Activated CD4-positive, alpha-beta memory T cell treated with anti-CD3 and anti-CD28 coated beads, Interleukin-2, amount 10 ng/mL, durations not matched to agents 7 days and 5 days (primary cell): ENCODE measurements at regions of chr5 and their contacts with region 1.

Region 1: DNA sequence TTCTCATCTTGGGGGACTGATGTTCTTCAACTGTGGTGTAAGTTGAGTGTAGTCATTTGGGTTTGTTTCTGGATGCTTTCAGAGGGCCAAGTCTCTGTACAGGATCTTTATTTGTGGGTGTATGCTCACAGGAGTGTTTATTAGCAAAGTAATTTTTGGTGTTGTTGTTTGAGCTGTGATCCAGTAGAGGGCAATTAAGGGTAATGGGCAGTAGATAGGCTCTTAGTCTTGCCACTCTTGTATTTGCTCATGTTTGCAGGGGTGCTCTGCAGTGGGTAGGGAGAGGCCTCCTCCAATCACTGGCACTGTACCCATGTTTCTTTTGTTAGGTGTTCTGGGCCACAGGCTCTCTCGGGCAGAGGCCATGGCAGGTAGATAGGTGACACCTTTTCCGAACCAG is 45.9 kb upstream of the ITGA2 start:
- DNase-seq: no peak
- H3K4me3 Mint-ChIP-seq: no peak overlapping the region
- H3K27ac Mint-ChIP-seq: no peak overlapping the region
- H3K4me1 Mint-ChIP-seq: peaks cover 17% of the 10 kb centered on the region
- H3K27me3 Mint-ChIP-seq: peaks cover 7% of the 10 kb centered on the region

Region 2: DNA sequence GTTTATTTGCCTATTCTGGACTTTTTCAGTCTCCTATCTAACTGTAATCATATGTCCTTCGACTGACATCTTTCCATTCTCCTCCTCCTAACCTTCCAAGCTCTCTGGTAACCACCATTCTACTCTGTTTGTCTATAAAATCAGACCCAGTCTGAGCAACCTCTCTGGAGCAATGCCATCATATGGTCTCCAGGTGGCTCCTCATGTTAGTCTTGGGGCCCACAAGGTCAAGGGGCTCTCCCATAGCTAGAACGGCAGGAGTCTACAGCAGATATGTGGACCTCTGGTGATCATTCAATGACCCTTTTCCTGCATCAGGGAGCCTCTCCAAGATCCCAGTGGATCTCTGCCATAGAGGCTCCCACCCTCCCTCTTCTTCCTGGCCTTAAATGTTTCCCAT is 562.9 kb before region 1 on chr5:
- CTCF ChIA-PET with region 1: no interaction called
- POLR2A ChIA-PET with region 1: no interaction called
- DNase-seq: no peak
- H3K4me3 Mint-ChIP-seq: no peak overlapping the region
- H3K27ac Mint-ChIP-seq: no peak overlapping the region
- H3K4me1 Mint-ChIP-seq: no peaks in the 10 kb centered on the region
- H3K27me3 Mint-ChIP-seq: no peaks in the 10 kb centered on the region

Region 3: GRCh38 chr5:52909192-52909591 is 34.1 kb before region 1 on chr5:
- CTCF ChIA-PET with region 1: no interaction called
- POLR2A ChIA-PET with region 1: no interaction called
- DNase-seq: no peak
- H3K4me3 Mint-ChIP-seq: no peak overlapping the region
- H3K27ac Mint-ChIP-seq: no peak overlapping the region
- H3K4me1 Mint-ChIP-seq: peaks cover 5% of the 10 kb centered on the region
- H3K27me3 Mint-ChIP-seq: no peaks in the 10 kb centered on the region

Region 4: DNA sequence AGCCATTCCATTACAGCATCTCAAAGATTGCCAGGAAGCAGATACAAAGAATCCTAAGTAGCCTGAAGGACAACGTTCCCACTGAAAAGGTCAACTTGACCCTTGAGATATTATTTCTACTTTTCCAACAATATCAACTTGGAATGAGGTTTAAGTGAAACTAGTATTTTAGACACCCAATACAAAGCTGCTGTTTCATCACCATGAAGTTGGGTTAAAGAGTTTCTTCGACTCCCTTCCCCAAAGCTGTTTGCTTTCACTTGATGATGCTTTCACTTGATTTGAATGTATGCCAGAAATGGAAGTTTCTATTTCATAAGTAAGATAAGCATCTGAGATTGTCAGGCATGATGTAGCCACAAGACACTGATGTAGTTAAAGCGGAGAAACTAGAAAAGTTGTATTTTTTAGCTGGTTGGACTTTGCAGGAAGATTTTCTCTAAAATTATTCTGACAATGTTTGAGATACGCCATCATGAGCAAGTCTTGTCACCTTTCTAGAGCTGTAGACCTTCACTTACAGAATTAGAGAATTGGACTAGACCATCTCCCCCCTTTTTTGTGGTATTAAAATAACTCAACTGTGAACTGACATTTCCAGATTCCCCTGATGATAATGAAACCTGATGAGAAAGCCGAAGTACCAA is 146.2 kb after region 1 on chr5:
- CTCF ChIA-PET with region 1: interaction called, 133 read pairs
- POLR2A ChIA-PET with region 1: interaction called, 8 read pairs
- DNase-seq: no peak
- H3K4me3 Mint-ChIP-seq: peak overlapping the region; percentile 19
- H3K27ac Mint-ChIP-seq: peak overlapping the region; percentile 54
- H3K4me1 Mint-ChIP-seq: peaks cover 31% of the 10 kb centered on the region
- H3K27me3 Mint-ChIP-seq: peaks cover 5% of the 10 kb centered on the region